Activated T-helper 1 cell treated with anti-CD3 and anti-CD28 coated beads, Interleukin-12 subunit alpha, Interleukin-12 subunit beta, Interleukin-2, Interleukin-4 antibody, amounts not matched to agents 30 ng/mL and 10 ng/mL and 1 ng/mL, durations not matched to agents 14 hours and 24 hours and 36 hours (primary cell): ENCODE measurements at regions of chr17 and their contacts with region 1.

Region 1: DNA sequence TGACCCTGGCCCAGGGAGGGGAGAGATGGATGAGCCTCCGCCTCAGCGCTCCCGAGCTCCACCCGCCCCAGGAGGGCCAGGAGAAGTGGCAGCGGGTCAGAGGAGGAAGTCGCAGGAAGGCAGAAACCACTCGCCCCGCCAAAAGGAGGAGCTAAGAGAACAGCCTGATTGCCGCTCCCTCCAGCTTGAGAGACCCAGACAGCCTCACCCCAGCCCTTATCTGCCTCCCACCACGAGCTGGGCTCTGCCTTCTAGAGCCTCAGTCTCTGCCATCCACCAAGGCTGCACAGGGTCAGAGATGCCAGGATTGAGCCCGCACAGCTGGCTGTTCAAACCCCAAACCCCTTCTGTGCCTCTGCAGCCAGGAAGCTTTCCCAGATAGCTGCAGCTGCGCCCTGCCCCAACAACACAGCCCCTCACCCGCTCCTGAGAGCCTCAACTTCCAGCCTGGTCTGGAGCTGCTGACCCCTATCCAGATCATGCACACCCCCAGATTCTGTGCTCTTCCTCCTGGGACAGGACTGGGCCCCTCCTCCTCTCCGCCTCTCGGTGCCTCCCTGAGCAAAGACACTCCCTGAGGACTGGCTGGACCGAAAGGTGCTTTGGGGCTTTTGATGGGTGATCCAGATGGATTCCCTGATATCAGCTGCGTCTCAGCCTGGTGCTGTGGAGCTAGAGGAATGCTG is 1.0 kb upstream of the ATP2A3 start:
- DNase-seq: peak; percentile 66
- H3K4me3 Mint-ChIP-seq: peak overlapping the region; percentile 88
- H3K27ac Mint-ChIP-seq: peak overlapping the region; percentile 90
- H3K4me1 Mint-ChIP-seq: peaks cover 38% of the 10 kb centered on the region
- H3K27me3 Mint-ChIP-seq: no peaks in the 10 kb centered on the region

Region 2: DNA sequence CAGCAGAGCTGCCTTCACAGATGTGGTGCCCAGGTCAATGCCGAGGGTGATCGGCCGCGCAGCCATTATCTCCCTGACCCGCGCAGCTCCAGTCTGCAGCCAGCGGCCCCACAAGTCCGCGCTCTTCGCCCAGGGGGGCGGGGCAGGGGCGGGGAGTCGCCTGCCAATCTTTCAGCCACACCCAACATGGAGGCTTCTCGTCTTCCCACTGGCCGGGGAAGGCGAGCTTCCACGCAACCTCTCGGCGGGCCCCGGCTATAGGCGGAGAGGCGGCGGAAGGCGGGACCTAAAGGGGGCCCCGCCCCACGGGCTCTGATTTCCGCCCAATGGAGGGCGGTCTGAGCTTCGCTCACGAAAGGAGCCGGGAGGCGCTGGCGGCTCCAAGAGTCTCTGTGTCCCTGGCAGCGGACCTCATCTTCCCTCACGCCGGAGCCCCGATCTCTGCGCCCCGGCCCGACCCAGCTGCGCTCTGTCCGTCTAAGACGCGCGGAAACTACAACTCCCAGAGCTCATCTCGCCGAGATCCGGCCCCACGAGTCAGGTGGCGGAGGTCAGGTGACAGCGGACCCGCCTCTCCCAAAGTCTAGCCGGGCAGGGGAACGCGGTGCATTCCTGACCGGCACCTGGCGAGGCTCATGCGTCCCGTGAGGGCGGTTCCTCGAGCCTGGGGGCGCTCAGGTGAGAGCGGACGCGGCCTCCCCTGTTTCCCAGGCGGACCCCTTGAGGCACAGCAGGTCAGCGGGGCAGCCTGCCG is 328.9 kb before region 1 on chr17 and contains the starts of genes CTNS and SHPK:
- intact Hi-C with region 1: loop called (anchors 1 kb)
- DNase-seq: peak; percentile 95
- H3K4me3 Mint-ChIP-seq: peak within 1 kb of the TSS; percentile 95
- H3K27ac Mint-ChIP-seq: peak within 1 kb of the TSS; percentile 98
- H3K4me1 Mint-ChIP-seq: peaks cover 48% of the 10 kb centered on the region
- H3K27me3 Mint-ChIP-seq: no peaks in the 10 kb centered on the region
- total RNA-seq, gene CTNS: 47.5 and 55.3 TPM in 2 replicates
- total RNA-seq, gene SHPK: 20.0 and 21.5 TPM in 2 replicates

Region 3: GRCh38 chr17:3845621-3846441 is 119.4 kb before region 1 on chr17 and contains the start of gene NCBP3:
- intact Hi-C with region 1: loop called (anchors 1 kb)
- DNase-seq: peak; percentile 90
- H3K4me3 Mint-ChIP-seq: peak within 1 kb of the TSS; percentile 97
- H3K27ac Mint-ChIP-seq: peak within 1 kb of the TSS; percentile 97
- H3K4me1 Mint-ChIP-seq: peaks cover 16% of the 10 kb centered on the region
- H3K27me3 Mint-ChIP-seq: peaks cover 9% of the 10 kb centered on the region
- total RNA-seq, gene NCBP3: 54.2 and 56.0 TPM in 2 replicates

Region 4: DNA sequence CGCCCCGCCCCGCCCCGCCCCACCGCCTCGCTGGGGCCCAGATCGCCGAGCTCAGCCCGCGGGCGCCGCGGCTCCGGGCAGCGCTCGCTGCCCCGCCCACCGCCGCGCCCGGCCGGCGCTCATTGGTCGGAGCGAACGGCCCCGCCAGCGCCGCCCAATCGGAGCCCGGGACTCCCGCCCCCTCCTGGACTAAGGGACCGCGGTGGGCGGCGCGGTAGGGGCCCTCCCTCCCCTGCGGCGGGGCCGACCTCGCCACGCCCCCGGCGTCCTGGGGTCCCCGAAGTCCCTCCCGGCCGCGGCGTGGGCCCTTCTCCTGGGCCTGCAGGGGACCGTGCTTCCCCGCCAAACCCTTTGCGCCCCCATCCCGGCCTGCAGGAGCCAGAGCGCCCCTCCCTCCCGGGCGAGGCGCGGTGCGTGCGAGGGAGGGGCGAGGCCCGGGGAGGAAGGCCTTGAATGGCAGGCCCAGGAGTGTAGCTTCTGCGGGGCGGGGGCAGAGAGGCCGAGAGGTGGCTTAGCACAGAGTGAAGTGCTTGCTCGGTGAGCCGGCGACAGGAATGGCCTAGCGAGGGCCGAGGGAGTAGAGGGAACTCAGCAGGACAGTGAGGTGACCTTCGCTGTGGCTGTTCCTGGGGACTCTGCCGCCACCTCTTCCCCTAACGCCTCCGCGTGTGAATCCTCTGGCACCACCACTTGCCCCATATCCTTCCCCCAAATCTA is 72.1 kb before region 1 on chr17 and contains the start of gene CAMKK1:
- intact Hi-C with region 1: loop called (anchors 1 kb)
- DNase-seq: peak; percentile 90
- H3K4me3 Mint-ChIP-seq: peak within 1 kb of the TSS; percentile 82
- H3K27ac Mint-ChIP-seq: peak within 1 kb of the TSS; percentile 86
- H3K4me1 Mint-ChIP-seq: peaks cover 30% of the 10 kb centered on the region
- H3K27me3 Mint-ChIP-seq: no peaks in the 10 kb centered on the region
- total RNA-seq, gene CAMKK1: 6.1 and 7.8 TPM in 2 replicates

Region 5: GRCh38 chr17:3913531-3914311 is 51.5 kb before region 1 on chr17:
- intact Hi-C with region 1: loop called (anchors 1 kb)
- DNase-seq: peak; percentile 68
- H3K4me3 Mint-ChIP-seq: no peak overlapping the region
- H3K27ac Mint-ChIP-seq: peak overlapping the region; percentile 16
- H3K4me1 Mint-ChIP-seq: peaks cover 38% of the 10 kb centered on the region
- H3K27me3 Mint-ChIP-seq: no peaks in the 10 kb centered on the region

Region 6: GRCh38 chr17:3944485-3945388 is 20.5 kb before region 1 on chr17:
- intact Hi-C with region 1: loop called (anchors 2 kb)
- DNase-seq: no peak
- H3K4me3 Mint-ChIP-seq: no peak overlapping the region
- H3K27ac Mint-ChIP-seq: no peak overlapping the region
- H3K4me1 Mint-ChIP-seq: no peaks in the 10 kb centered on the region
- H3K27me3 Mint-ChIP-seq: no peaks in the 10 kb centered on the region

Region 7: DNA sequence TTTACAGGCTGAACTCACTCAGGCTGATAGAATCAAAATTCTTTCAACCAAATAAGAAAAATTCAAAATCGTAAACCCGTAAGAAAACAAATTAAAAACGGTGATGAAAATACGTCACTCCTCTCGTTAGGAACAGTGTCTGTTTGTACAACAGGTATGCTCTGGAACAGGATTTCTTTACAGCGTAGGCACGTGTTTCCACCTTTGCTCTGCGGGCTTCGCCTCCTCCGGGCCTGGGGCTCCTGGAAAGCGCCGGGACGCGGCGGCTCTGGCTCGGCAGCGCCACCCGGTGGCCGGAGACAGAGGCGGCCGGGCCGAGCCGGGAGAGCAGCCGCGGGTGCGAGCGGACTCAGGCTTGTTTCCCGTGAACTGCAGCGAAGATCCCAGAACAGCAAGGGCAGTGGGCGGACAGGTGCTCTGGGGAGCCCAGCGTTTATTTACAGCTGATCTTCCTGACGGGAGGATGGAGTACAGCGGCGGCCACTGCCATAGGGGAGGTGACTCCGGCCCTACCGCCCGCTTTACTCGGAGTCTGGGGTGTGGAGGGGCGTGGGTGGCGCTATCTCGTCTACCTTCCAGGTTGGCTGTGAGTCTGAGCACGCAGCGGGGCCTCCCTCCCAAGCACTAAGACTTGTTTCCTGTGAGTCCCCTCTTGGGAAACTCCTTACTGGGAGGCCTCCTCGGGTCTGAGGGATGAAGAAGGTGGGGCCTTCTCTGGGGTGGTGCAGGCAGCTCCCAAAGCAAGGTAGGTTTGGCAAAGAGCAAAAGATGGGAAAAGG is 39.4 kb after region 1 on chr17:
- intact Hi-C with region 1: loop called (anchors 1 kb)
- DNase-seq: peak; percentile 32
- H3K4me3 Mint-ChIP-seq: no peak overlapping the region
- H3K27ac Mint-ChIP-seq: no peak overlapping the region
- H3K4me1 Mint-ChIP-seq: no peaks in the 10 kb centered on the region
- H3K27me3 Mint-ChIP-seq: no peaks in the 10 kb centered on the region

Region 8: GRCh38 chr17:4035081-4035680 is 69.9 kb after region 1 on chr17:
- intact Hi-C with region 1: no loop called
- DNase-seq: no peak
- H3K4me3 Mint-ChIP-seq: no peak overlapping the region
- H3K27ac Mint-ChIP-seq: no peak overlapping the region
- H3K4me1 Mint-ChIP-seq: no peaks in the 10 kb centered on the region
- H3K27me3 Mint-ChIP-seq: no peaks in the 10 kb centered on the region